HEK293 (cell line): ENCODE measurements at regions of chr1 and their contacts with region 1.

Region 1: GRCh38 chr1:160291248-160292220 is 6.6 kb upstream of the PEX19 start:
- H3K4me3 ChIP-seq: no peak overlapping the region
- H3K27ac ChIP-seq: no peak overlapping the region
- H3K4me1 ChIP-seq: no peaks in the 10 kb centered on the region
- CTCF ChIP-seq: peak; percentile 70

Region 2: DNA sequence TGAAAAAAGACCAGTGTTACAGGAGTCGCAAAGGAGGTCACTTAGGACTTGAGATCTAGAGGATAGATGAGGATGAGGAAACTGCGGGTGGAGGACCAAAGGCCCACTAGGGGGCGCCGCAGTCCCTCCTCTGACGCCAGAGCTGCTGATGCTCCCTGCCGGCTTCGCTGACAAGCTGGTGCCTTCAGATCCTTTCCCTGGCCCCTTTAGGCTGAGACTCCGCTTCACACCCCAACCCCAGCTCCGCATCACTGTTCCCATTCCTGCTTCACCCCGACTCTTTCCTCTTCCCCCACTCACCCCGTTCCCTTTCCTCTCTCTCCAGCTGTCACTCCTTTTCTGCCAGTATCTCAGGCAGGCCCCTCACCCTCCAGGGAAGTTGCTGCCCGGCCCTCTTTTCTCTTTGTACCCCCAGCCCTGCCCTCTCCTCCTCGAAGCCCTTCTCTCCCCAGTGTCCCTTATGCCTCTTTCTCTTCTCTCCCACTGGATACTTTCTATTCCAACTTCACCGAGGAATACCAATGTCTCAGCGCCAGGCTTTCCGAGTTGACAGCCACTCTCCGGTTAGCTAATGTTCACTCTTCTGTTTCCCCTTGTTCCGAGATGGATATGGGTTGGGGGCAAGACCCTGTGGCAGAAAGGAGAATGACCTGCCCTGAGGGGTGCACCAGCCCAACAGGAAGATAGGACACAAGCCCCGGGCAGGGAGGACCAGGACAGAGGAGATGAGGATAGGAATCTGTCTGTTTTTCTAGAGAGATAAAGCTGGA is 205.7 kb before region 1 on chr1:
- CTCF ChIA-PET with region 1: interaction called, 34 read pairs
- POLR2A ChIA-PET with region 1: no interaction called
- H3K4me3 ChIP-seq: no peak overlapping the region
- H3K27ac ChIP-seq: no peak overlapping the region
- H3K4me1 ChIP-seq: no peaks in the 10 kb centered on the region
- CTCF ChIP-seq: peak; percentile 82

Region 3: GRCh38 chr1:160193091-160193819 is 98.3 kb before region 1 on chr1:
- CTCF ChIA-PET with region 1: interaction called, 55 read pairs
- POLR2A ChIA-PET with region 1: interaction called, 5 read pairs
- H3K4me3 ChIP-seq: no peak overlapping the region
- H3K27ac ChIP-seq: no peak overlapping the region
- H3K4me1 ChIP-seq: no peaks in the 10 kb centered on the region
- CTCF ChIP-seq: peak; percentile 90

Region 4: GRCh38 chr1:160244209-160244608 is 47.3 kb before region 1 on chr1:
- CTCF ChIA-PET with region 1: interaction called, 17 read pairs
- POLR2A ChIA-PET with region 1: no interaction called
- H3K4me3 ChIP-seq: no peak overlapping the region
- H3K27ac ChIP-seq: no peak overlapping the region
- H3K4me1 ChIP-seq: peaks cover 19% of the 10 kb centered on the region
- CTCF ChIP-seq: no peak

Region 5: DNA sequence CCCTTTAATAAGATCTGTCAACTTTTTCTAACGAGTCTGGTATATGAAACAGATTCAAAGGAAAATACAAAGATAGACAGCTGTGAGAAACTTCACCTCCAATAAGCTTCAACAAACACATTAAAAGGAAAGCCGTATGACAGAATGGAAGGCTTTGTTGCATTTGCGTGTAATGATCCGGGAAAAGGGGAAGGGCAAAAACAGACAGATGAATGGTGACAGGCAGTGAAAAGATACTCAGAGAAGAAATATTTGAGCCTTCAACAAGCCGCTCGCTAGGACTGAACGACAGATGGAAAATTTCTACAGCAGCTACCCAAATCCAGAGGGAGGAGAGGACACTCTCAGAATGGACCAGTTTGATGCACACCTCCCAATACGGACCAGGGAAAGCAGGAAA is 36.6 kb after region 1 on chr1:
- CTCF ChIA-PET with region 1: interaction called, 28 read pairs
- POLR2A ChIA-PET with region 1: no interaction called
- H3K4me3 ChIP-seq: no peak overlapping the region
- H3K27ac ChIP-seq: no peak overlapping the region
- H3K4me1 ChIP-seq: no peaks in the 10 kb centered on the region
- CTCF ChIP-seq: no peak